Adrenal gland (tissue), 19 donors: ENCODE measurements at regions of chr17 and their contacts with region 1.

Region 1: DNA sequence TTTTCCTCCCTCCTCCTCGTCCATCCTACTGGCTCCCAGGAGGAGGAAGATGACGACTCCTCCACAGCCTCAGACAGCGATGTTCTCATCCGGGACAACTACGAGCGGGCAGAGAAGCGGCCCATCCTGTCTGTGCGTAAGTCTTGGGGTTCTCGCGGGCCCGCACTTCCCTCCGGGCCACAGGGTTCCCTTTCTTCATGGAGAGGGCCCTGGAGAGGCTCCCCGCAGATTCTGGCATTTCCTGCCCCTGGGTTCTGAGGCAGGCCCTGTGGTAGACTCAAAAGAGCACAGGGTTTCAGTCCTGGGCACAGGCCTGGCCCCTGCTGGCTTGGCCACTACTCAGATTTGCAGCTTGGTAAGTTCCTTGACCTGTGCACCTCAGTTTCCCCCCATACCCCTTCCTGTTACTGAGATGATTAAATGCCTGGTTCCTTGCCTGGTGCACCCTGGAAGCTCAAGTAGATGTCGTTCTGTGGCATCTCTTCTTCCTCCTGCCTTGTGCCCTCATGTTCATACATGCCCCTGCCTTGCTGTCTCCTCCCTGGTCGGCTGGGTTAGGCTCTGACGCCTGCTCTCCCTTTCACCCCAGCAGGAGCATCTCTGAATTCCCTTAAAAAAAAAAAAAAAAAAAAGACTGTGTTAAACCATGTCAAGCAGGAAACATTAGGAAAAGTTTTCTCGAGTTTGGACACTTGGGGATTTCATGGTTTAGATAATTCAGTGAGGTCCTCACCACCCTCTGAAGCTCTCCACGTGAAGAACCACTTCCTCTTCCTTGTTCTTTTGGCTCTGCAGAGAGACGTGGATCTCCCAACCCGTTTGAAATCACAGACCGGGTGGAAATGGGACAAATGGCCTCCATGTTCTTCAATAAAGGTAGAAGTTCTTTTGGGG is 14.3 kb upstream of the NAT9 start:
- DNase-seq: no peak
- H3K4me3 ChIP-seq: no peak overlapping the region
- H3K27ac ChIP-seq: no peak overlapping the region
- H3K4me1 ChIP-seq: no peaks in the 10 kb centered on the region
- H3K27me3 ChIP-seq: no peaks in the 10 kb centered on the region
- CTCF ChIP-seq: no peak
- POLR2A ChIP-seq: no peak

Region 2: DNA sequence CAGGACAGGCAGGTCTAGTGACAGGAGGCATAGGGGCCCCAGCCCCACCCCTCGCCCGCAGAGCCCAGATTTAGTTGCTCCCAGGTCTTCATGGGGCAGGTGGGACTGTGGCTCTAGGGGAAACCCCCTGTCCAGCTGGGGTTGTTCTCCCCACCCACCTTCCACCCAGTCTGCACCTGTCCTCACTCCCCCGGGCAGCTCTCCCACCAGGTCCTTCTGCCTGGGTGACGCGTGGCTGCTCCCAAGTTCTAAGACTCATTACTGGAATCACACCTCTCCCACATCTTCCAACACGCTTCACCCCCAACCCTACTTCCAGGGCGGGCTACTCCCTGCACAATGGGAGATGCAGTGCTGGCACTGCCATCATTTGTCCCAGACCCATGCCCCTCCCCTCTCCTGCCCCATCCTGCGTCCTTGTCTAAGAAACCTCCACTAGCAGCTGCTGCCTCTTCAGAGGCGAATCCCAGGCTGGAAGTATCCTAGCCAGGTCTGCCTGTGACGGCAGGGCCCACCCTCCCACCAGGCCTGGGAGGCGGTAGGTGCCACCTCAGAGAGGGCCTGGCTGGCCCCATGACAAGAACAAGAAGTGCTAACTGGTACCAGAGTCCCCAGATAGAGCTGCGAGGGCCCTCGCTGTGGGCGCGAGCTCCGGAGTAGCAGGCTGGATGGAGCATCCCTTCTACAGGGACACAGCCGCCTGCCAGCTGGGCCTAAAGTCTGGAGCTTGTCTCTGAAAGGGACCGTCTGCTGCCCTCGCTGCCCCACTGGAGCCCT is 46.5 kb after region 1 on chr17:
- intact Hi-C with region 1: loop called in 1 of 2 experiments (anchors 2 kb)
- DNase-seq: no peak
- H3K4me3 ChIP-seq: no peak overlapping the region
- H3K27ac ChIP-seq: no peak overlapping the region
- H3K4me1 ChIP-seq: peaks cover 9 to 15% of the 10 kb centered on the region in 2 donors
- H3K27me3 ChIP-seq: no peaks in the 10 kb centered on the region
- CTCF ChIP-seq: no peak
- POLR2A ChIP-seq: no peak

Region 3: DNA sequence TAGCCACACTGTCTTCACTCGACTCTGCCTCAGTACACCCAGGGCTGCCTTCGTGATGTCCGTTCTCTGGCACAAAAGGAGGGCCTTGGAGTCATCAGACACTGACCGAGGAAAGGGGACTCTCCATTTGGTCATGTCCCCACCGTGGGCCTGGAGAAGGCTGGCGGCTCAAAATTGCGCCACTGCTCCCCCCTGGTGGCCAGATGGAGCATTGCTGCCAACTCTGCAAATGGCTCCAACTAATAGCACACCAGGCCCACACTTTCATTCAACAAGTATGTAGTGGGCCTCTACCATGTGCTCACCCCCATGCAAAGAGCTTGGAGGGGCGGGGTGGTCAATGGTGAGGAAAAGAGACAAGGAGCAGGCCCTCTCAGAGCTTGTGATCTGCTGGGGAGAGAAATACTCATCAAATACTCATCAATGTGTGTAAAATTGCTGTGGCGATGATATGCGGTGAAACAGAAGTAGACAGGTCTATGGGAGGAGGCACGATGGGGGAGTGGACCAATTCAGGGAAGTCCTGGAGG is 74.5 kb after region 1 on chr17:
- intact Hi-C with region 1: loop called (anchors 2 to 5 kb)
- DNase-seq: peak; percentile 77 to 93 (median 81)
- H3K4me3 ChIP-seq: no peak overlapping the region
- H3K27ac ChIP-seq: peak overlapping the region in 3 of 5 donors; percentile 40 to 64 (median 45)
- H3K4me1 ChIP-seq: peaks cover 37 to 76% of the 10 kb centered on the region in 2 donors
- H3K27me3 ChIP-seq: no peaks in the 10 kb centered on the region
- CTCF ChIP-seq: peak; percentile 92 to 98 (median 96)
- POLR2A ChIP-seq: no peak